ENCODE measurements at regions of chr10 and their contacts with region 1.

Region 1: DNA sequence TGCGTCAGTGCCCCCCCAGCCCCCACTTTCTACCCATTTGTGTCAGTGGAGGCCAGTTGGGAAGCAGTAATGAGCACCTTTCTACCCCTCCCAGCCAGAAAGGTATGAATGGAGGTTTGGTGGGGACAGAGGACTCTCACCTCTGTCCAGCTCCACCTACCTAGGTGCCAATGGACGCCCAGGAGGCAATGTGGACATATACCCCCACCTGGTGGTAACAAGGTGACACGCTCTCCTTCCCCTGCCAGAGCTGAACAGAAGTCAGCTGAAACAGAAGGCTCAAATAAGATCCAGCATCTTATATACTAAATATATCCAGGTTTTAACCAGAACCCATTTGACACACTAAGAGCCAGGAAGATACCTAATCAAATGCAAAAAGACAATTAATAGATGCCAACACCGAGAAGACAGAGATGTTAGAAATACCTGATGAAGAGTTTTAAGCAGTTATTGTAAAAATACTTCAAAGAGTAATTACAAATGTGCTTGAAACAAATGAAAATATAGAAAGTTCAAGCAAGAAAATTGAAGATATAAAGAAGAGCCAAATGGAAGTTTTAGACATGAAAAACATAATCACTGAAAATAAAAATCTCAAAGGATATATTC is 18.4 kb upstream of the SORCS3 start:
- DNase-seq: peak; percentile 67
- H3K4me3 Mint-ChIP-seq: no peak overlapping the region
- H3K27ac Mint-ChIP-seq: no peak overlapping the region
- H3K4me1 Mint-ChIP-seq: no peaks in the 10 kb centered on the region
- H3K27me3 Mint-ChIP-seq: peaks cover 41% of the 10 kb centered on the region
- CTCF ChIP-seq: peak; percentile 87

Region 2: DNA sequence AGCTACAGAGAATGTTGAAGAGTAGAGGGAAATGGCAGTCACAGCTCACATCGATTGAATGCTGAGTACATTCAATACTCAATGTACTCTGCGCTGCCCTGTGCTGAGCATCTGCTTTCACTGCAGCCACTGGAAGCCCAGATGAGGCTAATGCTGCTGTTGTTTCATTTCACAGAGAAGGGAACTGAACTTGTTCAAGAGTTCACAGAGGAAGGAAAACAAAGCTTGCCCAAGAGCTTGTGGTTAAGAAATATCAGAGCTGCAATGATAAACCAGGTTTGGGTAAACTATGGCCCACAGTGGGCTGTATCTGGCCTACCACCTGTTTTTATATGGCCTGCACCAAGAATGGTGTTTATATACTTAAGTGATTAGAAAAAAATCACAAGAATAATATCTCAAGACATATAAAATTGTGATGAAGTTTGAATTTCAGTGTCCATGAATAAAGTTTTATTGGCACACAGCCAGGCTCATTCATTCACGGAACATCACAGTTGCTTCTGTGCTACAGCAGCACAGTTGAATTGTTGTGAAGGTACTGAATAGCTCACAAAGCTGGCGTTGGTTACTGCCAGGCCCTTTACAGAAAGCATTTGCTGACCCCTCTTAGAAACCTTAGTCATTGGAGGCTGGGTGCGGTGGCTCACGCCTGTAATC is 204.9 kb before region 1 on chr10:
- CTCF ChIA-PET with region 1: interaction called, 13 read pairs
- POLR2A ChIA-PET with region 1: no interaction called
- intact Hi-C with region 1: no loop called
- DNase-seq: no peak
- H3K4me3 Mint-ChIP-seq: no peak overlapping the region
- H3K27ac Mint-ChIP-seq: no peak overlapping the region
- H3K4me1 Mint-ChIP-seq: no peaks in the 10 kb centered on the region
- H3K27me3 Mint-ChIP-seq: no peaks in the 10 kb centered on the region
- CTCF ChIP-seq: no peak